Uterus (tissue), 4 donors: ENCODE measurements at regions of chr3 and their contacts with region 1.

Region 1: GRCh38 chr3:102229062-102229655 is 205.7 kb upstream of the ZPLD1 start:
- DNase-seq: peak; percentile 68 to 75
- H3K4me3 ChIP-seq: no peak overlapping the region
- H3K27ac ChIP-seq: no peak overlapping the region
- H3K4me1 ChIP-seq: peaks cover 0 to 3% of the 10 kb centered on the region in 2 donors
- H3K27me3 ChIP-seq: no peaks in the 10 kb centered on the region
- CTCF ChIP-seq: peak; percentile 88 to 93 (median 90)
- POLR2A ChIP-seq: no peak

Region 2: DNA sequence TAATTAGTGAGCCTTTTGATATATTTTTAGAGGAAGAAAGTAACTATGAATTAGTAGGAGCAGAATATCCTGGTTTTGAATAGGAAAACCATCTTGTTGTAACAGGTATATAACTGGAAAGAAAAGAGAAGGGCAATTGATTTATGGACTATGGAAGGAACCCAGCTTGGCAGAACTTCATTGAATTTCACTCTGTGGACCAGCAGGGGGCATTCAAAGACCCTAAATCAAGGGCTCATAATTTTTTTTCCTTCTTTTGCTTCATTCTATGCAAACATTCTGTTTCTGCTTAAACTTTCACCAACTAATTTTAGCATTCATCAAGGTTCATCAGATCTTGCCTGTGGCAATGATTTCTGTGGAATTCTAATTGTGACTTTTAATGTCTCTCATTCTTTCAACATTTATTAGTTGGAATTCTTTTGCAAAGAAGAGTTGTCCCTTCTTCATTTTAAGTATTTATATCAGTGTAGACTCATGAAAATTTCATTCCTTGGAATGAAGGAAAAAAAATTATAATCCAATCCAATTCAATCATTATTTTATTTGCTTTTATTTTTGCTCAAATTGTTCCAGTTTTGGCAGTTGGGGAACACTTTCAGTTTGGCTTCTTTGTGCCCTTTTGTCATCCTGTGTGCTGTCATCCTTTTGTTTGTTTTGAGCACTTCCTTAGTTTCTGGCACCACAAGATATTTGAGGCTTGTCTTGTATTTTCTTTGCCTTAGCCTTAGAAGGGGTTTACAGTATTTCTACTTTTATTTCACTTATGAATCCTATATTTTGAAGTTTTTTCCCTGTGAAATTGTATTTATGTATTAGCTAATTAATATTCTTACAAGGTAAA is 419.8 kb before region 1 on chr3:
- intact Hi-C with region 1: loop called (anchors 5 kb)
- DNase-seq: no peak
- H3K4me3 ChIP-seq: no peak overlapping the region
- H3K27ac ChIP-seq: peak overlapping the region; percentile 55 to 59
- H3K4me1 ChIP-seq: peaks cover 0 to 8% of the 10 kb centered on the region in 2 donors
- H3K27me3 ChIP-seq: no peaks in the 10 kb centered on the region
- CTCF ChIP-seq: peak; percentile 53 to 73 (median 69)
- POLR2A ChIP-seq: no peak